ENCODE measurements at regions of chr3 and their contacts with region 1.

Region 1: DNA sequence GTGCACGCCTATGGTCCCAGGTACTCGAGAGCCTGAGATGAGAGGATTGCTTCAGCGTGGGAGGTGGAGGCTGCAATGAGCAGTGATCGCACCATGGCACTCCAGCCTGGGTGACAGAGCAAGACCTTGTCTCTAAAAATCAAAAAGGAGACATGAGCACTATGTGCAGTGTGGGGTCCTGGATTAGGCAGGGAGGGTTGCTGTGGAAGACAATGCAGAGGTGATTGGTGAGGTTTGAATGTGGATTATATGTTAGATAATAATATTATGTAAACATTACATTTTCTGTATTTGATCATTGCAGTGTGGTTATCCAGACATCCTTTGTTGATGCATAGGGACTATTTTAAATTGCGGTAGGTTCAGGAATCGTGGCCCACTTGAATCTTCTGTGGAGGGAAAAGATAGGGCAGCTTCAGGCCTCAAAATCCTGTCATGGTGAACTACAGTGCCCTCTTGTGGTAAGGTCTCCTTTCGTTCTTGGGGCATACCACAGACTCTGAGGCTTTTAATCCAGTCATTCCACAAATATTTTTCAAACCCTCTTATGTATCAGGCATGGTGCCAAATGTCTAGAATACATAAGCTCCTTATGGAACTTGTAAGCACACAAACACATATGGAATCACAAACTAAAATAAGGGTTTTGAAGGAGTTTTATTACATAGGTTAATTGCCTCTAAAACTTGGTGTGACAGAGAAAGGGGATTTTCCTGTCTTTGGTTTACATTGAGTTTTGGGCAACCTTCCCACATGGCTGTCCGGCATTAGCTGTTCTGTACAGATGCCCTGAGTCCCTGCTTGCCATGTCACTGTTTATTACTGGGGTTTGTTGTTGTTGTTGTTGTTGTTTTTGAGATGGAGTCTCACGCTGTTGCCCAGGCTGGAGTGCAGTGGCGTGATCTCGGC is 37.7 kb downstream of the GPD1L start:
- DNase-seq: no peak
- ATAC-seq: peak; percentile 66
- H3K4me3 Mint-ChIP-seq: no peak overlapping the region
- H3K27ac Mint-ChIP-seq: no peak overlapping the region
- H3K4me1 Mint-ChIP-seq: peaks cover 25% of the 10 kb centered on the region
- H3K27me3 Mint-ChIP-seq: no peaks in the 10 kb centered on the region
- CTCF ChIP-seq: peak; percentile 74

Region 2: DNA sequence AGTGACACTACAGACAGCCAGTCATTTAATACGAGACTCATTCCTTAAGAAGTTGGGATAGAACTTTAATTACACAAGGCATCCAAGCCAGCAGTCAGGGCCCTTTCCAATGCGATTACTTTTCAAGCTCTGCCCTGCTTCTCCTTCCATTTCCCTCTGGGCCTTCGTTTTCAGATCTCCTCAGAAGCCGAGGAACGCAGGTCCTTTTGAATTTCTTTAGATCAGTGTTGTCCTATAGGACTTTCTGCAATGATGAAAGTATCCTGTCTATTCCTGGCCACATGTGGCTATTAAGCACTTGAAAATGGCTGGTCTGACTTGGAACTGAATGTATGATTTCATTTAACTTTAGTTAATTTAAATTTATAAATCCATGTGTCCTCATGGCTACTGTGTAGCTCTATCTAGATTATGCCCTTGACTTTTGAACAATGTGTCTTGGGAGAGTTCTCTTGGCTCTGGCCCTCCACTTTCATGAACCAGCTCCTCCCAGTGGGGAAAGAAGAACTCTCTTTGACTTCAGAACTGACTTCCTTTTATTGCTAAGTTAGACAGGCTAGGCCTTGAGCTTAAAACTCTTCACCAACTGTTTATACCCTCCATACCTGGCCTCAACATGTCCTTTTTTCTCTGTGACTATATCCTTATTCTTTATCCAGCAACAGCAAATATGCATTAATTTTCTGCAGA is 1515.1 kb before region 1 on chr3:
- CTCF ChIA-PET with region 1: no interaction called
- POLR2A ChIA-PET with region 1: no interaction called
- intact Hi-C with region 1: no loop called
- DNase-seq: no peak
- ATAC-seq: peak; percentile 52
- H3K4me3 Mint-ChIP-seq: peak overlapping the region; percentile 49
- H3K27ac Mint-ChIP-seq: peak overlapping the region; percentile 91
- H3K4me1 Mint-ChIP-seq: peaks cover 94% of the 10 kb centered on the region
- H3K27me3 Mint-ChIP-seq: no peaks in the 10 kb centered on the region
- CTCF ChIP-seq: no peak

Region 3: DNA sequence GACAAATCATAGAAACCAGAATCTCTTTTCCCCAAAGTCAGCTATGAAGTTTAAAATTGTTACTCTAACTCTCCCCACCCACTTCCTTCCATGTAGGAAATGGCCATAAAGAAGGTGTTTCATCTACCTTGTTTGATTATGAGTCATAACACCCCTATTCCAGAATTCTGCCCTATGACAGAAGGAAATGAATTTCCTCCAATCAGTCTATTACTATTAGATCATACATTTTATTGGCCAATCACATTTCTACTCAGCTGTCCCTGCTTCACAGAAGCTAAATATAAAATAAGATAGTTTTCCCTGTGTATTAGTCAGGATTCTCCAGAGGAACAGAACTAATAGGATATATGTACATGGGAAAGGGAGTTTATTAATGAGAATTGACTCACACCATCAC is 1435.6 kb before region 1 on chr3:
- CTCF ChIA-PET with region 1: no interaction called
- POLR2A ChIA-PET with region 1: no interaction called
- intact Hi-C with region 1: no loop called
- DNase-seq: no peak
- ATAC-seq: no peak
- H3K4me3 Mint-ChIP-seq: no peak overlapping the region
- H3K27ac Mint-ChIP-seq: no peak overlapping the region
- H3K4me1 Mint-ChIP-seq: peaks cover 12% of the 10 kb centered on the region
- H3K27me3 Mint-ChIP-seq: no peaks in the 10 kb centered on the region
- CTCF ChIP-seq: no peak

Region 4: GRCh38 chr3:30768703-30769685 is 1375.1 kb before region 1 on chr3:
- CTCF ChIA-PET with region 1: no interaction called
- POLR2A ChIA-PET with region 1: no interaction called
- intact Hi-C with region 1: loop called (anchors 5 kb)
- DNase-seq: peak; percentile 27
- ATAC-seq: no peak
- H3K4me3 Mint-ChIP-seq: no peak overlapping the region
- H3K27ac Mint-ChIP-seq: no peak overlapping the region
- H3K4me1 Mint-ChIP-seq: no peaks in the 10 kb centered on the region
- H3K27me3 Mint-ChIP-seq: peaks cover 14% of the 10 kb centered on the region
- CTCF ChIP-seq: no peak

Region 5: DNA sequence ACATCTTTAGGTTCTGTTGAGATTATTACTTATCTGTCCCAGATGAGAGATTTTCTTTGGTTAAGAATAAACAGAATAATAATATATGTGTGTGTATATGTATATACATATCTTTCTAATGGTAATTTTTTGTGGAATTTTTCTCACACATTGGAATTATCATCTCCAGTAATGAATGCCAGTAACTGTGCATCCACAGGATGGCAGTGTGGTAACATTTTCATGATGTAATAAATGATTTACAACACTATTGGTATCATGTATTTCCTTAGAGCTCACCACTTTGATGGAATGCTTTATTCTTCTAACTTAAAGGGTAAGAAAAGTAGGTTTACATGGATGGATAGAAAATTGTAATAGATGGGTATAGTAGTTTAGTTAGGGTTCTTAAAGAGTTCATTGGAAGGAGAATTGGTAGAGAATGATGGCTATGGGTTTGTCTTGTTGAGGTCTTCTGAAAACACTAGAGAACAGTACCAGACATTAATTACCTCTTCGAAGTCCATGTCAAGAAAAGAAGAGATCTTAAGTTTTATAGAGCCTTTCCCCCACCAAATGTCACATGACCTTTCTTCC is 533.3 kb before region 1 on chr3:
- CTCF ChIA-PET with region 1: interaction called, 9 read pairs
- POLR2A ChIA-PET with region 1: no interaction called
- intact Hi-C with region 1: loop called (anchors 1 kb)
- DNase-seq: no peak
- ATAC-seq: no peak
- H3K4me3 Mint-ChIP-seq: no peak overlapping the region
- H3K27ac Mint-ChIP-seq: no peak overlapping the region
- H3K4me1 Mint-ChIP-seq: peaks cover 17% of the 10 kb centered on the region
- H3K27me3 Mint-ChIP-seq: no peaks in the 10 kb centered on the region
- CTCF ChIP-seq: peak; percentile 31

Region 6: DNA sequence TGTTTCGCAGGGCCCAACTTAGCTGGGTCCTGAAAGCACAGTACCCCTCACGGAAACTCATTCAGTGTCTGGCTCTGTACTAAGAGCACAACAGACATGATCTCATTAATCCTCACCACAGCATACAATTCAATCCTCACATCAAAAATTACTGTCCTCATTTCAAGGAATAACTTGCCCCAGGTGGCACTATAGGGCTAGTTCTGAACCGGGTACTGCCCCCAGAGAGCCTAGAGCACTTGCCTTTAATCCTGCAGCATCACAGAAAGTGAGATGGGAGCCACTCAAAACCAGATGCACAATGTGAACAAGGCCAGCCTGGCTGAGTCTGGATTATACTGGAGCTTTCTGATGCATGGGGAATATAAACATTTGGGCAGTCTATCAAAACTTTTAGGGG is 285.7 kb before region 1 on chr3:
- CTCF ChIA-PET with region 1: interaction called, 20 read pairs
- POLR2A ChIA-PET with region 1: no interaction called
- intact Hi-C with region 1: loop called (anchors 1 kb)
- DNase-seq: no peak
- ATAC-seq: peak; percentile 69
- H3K4me3 Mint-ChIP-seq: no peak overlapping the region
- H3K27ac Mint-ChIP-seq: peak overlapping the region; percentile 71
- H3K4me1 Mint-ChIP-seq: peaks cover 74% of the 10 kb centered on the region
- H3K27me3 Mint-ChIP-seq: no peaks in the 10 kb centered on the region
- CTCF ChIP-seq: no peak

Region 7: GRCh38 chr3:32106280-32106928 is 37.7 kb before region 1 on chr3 and contains the start of gene GPD1L:
- CTCF ChIA-PET with region 1: interaction called, 3 read pairs
- POLR2A ChIA-PET with region 1: no interaction called
- intact Hi-C with region 1: loop called (anchors 2 kb)
- DNase-seq: peak; percentile 93
- ATAC-seq: peak; percentile 99
- H3K4me3 Mint-ChIP-seq: peak within 1 kb of the TSS; percentile 96
- H3K27ac Mint-ChIP-seq: peak within 1 kb of the TSS; percentile 87
- H3K4me1 Mint-ChIP-seq: peaks cover 18% of the 10 kb centered on the region
- H3K27me3 Mint-ChIP-seq: no peaks in the 10 kb centered on the region
- CTCF ChIP-seq: no peak
- total RNA-seq, gene GPD1L: 8.2 and 9.6 TPM in 2 replicates